ENCODE measurements at regions of chr5 and their contacts with region 1.

Region 1: GRCh38 chr5:119411935-119412602 is 40.2 kb upstream of the HSD17B4 start:
- DNase-seq: peak; percentile 65
- ATAC-seq: peak; percentile 78
- H3K4me3 ChIP-seq: peak overlapping the region; percentile 62
- H3K27ac ChIP-seq: peak overlapping the region; percentile 52
- H3K4me1 ChIP-seq: peaks cover 29% of the 10 kb centered on the region
- H3K27me3 ChIP-seq: no peaks in the 10 kb centered on the region
- CTCF ChIP-seq: peak; percentile 82 to 93 (median 88)
- EP300 ChIP-seq: no peak
- POLR2A ChIP-seq: no peak
- RAD21 ChIP-seq: peak; percentile 99

Region 2: DNA sequence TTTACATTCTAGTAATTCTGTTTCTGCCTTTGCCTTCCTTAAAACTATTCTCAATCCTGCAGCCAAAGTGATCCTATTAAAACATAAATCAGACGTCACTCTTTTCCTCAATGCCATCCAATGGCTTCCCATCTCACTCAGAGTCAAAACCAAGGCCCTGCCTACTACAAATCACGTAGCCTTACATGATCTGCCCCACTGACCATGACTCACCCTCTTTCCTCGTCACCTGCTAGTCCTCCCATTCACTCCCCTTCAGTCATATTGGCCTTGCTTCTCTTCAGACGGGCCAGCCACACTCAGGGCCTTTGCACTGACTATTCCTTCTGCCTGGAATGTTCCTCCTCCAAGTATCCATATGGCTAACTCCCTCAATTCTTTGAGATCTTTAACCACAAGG is 380.2 kb before region 1 on chr5:
- CTCF ChIA-PET with region 1: interaction called, 143 read pairs
- POLR2A ChIA-PET with region 1: no interaction called
- RAD21 ChIA-PET with region 1: interaction called, 15 read pairs
- SMC1A ChIA-PET with region 1: interaction called, 91 read pairs
- in situ Hi-C with region 1: no loop called
- intact Hi-C with region 1: no loop called
- DNase-seq: peak; percentile 73
- ATAC-seq: peak; percentile 93
- H3K4me3 ChIP-seq: peak overlapping the region; percentile 29; the same call in 1 of the 2 replicates
- H3K27ac ChIP-seq: peak overlapping the region; percentile 95
- H3K4me1 ChIP-seq: peaks cover 39% of the 10 kb centered on the region
- H3K27me3 ChIP-seq: no peaks in the 10 kb centered on the region
- CTCF ChIP-seq: no peak
- EP300 ChIP-seq: no peak
- POLR2A ChIP-seq: peak; percentile 51; the same call in 1 of the 2 replicates
- RAD21 ChIP-seq: no peak

Region 3: DNA sequence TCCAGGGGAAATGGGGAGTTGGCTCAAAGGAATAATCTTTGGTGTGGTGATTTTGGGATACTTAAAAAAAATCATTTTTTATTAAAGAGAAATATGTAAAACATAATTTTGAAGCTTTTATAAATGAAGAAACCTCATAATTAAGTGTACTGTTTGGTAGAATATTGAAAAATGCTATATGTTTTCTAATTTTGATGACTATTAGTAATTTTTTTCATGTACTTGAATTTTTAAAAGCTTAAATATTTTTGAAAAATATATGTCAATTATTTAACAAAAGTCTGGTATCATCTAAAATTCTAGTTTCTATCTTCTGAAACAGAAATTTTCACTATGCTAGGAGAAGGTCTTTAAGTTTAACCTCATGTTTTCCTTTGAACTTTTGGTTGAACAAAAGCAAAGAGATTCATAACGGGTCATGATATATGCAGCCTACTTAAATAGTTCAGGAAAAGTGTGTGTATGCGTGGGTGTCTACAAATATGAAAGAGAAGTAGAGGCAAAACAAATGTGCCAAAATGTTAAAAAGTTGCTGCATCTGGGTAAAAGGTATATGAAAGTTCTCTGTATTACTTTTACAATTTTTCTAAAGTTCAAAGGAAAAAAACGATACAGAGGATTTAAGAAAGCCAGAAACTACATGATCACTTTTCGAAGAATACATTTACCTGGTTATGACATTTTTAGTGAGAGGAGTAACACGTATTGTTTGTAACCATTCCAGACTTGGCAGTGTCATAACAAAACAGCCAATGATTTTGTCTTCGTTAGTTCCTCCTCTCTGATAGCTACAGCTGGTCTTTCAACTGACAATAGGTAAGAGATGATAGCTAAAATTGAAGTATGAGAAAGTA is 173.6 kb before region 1 on chr5:
- CTCF ChIA-PET with region 1: interaction called, 16 read pairs
- POLR2A ChIA-PET with region 1: no interaction called
- RAD21 ChIA-PET with region 1: interaction called, 5 read pairs
- SMC1A ChIA-PET with region 1: interaction called, 6 read pairs
- in situ Hi-C with region 1: no loop called
- intact Hi-C with region 1: no loop called
- DNase-seq: no peak
- ATAC-seq: no peak
- H3K4me3 ChIP-seq: no peak overlapping the region
- H3K27ac ChIP-seq: no peak overlapping the region
- H3K4me1 ChIP-seq: no peaks in the 10 kb centered on the region
- H3K27me3 ChIP-seq: no peaks in the 10 kb centered on the region
- CTCF ChIP-seq: no peak
- EP300 ChIP-seq: no peak
- POLR2A ChIP-seq: no peak
- RAD21 ChIP-seq: no peak

Region 4: DNA sequence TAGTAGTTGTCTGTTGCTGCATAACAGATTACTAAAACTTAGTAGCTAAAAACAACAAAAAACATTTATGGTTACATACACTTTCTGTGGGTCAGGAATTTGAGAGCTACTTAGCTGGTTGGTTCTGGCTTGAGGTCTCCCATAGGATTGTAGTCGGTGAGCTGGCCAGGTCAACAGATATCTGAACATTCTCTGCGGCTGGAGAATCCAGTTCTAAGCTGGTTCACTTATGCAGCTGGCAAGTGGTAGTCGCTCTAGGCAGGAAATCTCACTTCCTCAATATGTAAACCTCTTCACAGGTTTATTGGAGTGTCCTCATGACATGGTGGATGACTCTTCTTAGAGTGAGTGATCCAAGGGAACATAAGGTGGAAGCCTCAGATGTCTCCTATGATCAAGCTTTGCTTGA is 121.9 kb before region 1 on chr5:
- CTCF ChIA-PET with region 1: interaction called, 28 read pairs
- POLR2A ChIA-PET with region 1: interaction called, 5 read pairs
- RAD21 ChIA-PET with region 1: interaction called, 13 read pairs
- SMC1A ChIA-PET with region 1: interaction called, 20 read pairs
- in situ Hi-C with region 1: no loop called
- intact Hi-C with region 1: no loop called
- DNase-seq: peak; percentile 66
- ATAC-seq: peak; percentile 90
- H3K4me3 ChIP-seq: peak overlapping the region; percentile 38
- H3K27ac ChIP-seq: peak overlapping the region; percentile 84
- H3K4me1 ChIP-seq: peaks cover 46% of the 10 kb centered on the region
- H3K27me3 ChIP-seq: no peaks in the 10 kb centered on the region
- CTCF ChIP-seq: no peak
- EP300 ChIP-seq: peak; percentile 69 to 79; a peak in 2 of 4 replicates
- POLR2A ChIP-seq: no peak
- RAD21 ChIP-seq: no peak

Region 5: DNA sequence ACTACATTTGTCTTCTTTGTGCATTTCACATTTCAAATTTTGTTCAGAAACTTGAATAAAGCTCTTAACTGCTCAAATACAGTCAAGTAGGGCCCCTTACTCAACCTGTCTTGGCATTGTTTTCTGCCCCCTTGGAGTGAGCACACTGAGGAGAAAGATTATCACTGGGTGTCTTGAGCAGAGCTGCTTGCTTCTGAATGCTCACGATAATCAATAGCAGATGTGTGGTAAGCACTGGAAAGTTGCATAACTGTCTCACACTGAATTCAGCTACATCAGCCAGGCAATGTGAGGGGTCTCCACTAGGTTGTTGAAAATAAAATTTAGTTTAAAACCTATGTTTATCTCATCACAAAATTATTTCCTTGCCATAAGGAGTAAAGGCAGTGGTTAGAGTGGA is 64.1 kb before region 1 on chr5:
- CTCF ChIA-PET with region 1: interaction called, 261 read pairs
- POLR2A ChIA-PET with region 1: interaction called, 4 read pairs
- RAD21 ChIA-PET with region 1: interaction called, 232 read pairs
- SMC1A ChIA-PET with region 1: interaction called, 583 read pairs
- in situ Hi-C with region 1: no loop called
- intact Hi-C with region 1: no loop called
- DNase-seq: no peak
- ATAC-seq: no peak
- H3K4me3 ChIP-seq: no peak overlapping the region
- H3K27ac ChIP-seq: peak overlapping the region; percentile 21; the same call in 1 of the 2 replicates
- H3K4me1 ChIP-seq: peaks cover 70% of the 10 kb centered on the region
- H3K27me3 ChIP-seq: no peaks in the 10 kb centered on the region
- CTCF ChIP-seq: no peak
- EP300 ChIP-seq: no peak
- POLR2A ChIP-seq: no peak
- RAD21 ChIP-seq: no peak

Region 6: DNA sequence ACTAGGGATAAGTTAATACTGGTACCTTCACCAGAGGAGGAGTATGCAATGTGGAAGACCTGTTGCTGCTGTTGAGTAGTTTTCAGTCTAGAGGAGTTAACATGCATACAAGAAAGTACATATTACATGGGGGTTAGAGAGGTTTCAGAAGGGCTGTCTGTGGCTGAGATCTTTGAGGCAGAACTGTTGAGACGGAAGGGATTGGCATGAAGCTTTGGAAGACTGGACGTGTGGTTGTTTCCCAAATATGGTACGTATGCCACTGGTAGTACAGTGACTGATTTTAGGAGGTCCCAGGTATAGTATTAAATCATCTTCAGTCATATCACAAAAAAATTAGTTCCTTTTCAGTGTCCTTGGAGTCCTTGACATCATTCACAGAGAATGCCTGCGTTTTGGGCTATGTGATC is 38.6 kb before region 1 on chr5:
- CTCF ChIA-PET with region 1: interaction called, 167 read pairs
- POLR2A ChIA-PET with region 1: interaction called, 3 read pairs
- RAD21 ChIA-PET with region 1: interaction called, 10 read pairs
- SMC1A ChIA-PET with region 1: interaction called, 40 read pairs
- in situ Hi-C with region 1: no loop called
- intact Hi-C with region 1: no loop called
- DNase-seq: peak; percentile 65
- ATAC-seq: peak; percentile 80
- H3K4me3 ChIP-seq: no peak overlapping the region
- H3K27ac ChIP-seq: peak overlapping the region; percentile 40; the same call in 1 of the 2 replicates
- H3K4me1 ChIP-seq: peaks cover 16% of the 10 kb centered on the region
- H3K27me3 ChIP-seq: no peaks in the 10 kb centered on the region
- CTCF ChIP-seq: no peak
- EP300 ChIP-seq: no peak
- POLR2A ChIP-seq: no peak
- RAD21 ChIP-seq: no peak

Region 7: GRCh38 chr5:119435436-119436132 is 23.5 kb after region 1 on chr5:
- CTCF ChIA-PET with region 1: interaction called, 46 read pairs
- POLR2A ChIA-PET with region 1: interaction called, 3 read pairs
- RAD21 ChIA-PET with region 1: interaction called, 33 read pairs
- SMC1A ChIA-PET with region 1: interaction called, 36 read pairs
- in situ Hi-C with region 1: no loop called
- intact Hi-C with region 1: no loop called
- DNase-seq: peak; percentile 44
- ATAC-seq: peak; percentile 95
- H3K4me3 ChIP-seq: no peak overlapping the region
- H3K27ac ChIP-seq: no peak overlapping the region
- H3K4me1 ChIP-seq: peaks cover 5% of the 10 kb centered on the region; the same call in 1 of the 2 replicates
- H3K27me3 ChIP-seq: no peaks in the 10 kb centered on the region
- CTCF ChIP-seq: peak; percentile 64 to 69 (median 64)
- EP300 ChIP-seq: no peak
- POLR2A ChIP-seq: no peak
- RAD21 ChIP-seq: peak; percentile 75

Region 8: GRCh38 chr5:119631660-119632059 is 219.6 kb after region 1 on chr5:
- CTCF ChIA-PET with region 1: no interaction called
- POLR2A ChIA-PET with region 1: no interaction called
- RAD21 ChIA-PET with region 1: no interaction called
- SMC1A ChIA-PET with region 1: no interaction called
- in situ Hi-C with region 1: no loop called
- intact Hi-C with region 1: no loop called
- DNase-seq: peak; percentile 16
- ATAC-seq: peak; percentile 87
- H3K4me3 ChIP-seq: no peak overlapping the region
- H3K27ac ChIP-seq: no peak overlapping the region
- H3K4me1 ChIP-seq: no peaks in the 10 kb centered on the region
- H3K27me3 ChIP-seq: no peaks in the 10 kb centered on the region
- CTCF ChIP-seq: no peak
- EP300 ChIP-seq: no peak
- POLR2A ChIP-seq: no peak
- RAD21 ChIP-seq: no peak

Measured in GM12878 (cell line).